Naive thymus-derived CD8-positive, alpha-beta T cell (primary cell): ENCODE measurements at regions of chr6 and their contacts with region 1.

Region 1: GRCh38 chr6:139134817-139135581 is at the start of gene HECA:
- DNase-seq: peak; percentile 99 to 100 (median 100)
- ATAC-seq: peak; percentile 62 to 78
- H3K4me3 Mint-ChIP-seq: peak within 1 kb of the TSS; percentile 86 to 100 (median 96)
- H3K27ac Mint-ChIP-seq: peak within 1 kb of the TSS; percentile 95 to 100 (median 99)
- H3K4me1 Mint-ChIP-seq: peaks cover 39 to 81% (median 68%) of the 10 kb centered on the region in 4 donors
- H3K27me3 Mint-ChIP-seq: peaks cover 0 to 3% (median 0%) of the 10 kb centered on the region in 5 donors
- polyA plus RNA-seq, gene HECA: 4.6 to 8.5 (median 5.5) TPM

Region 2: GRCh38 chr6:138999954-139000725 is 134.9 kb before region 1 on chr6:
- POLR2A ChIA-PET with region 1: no interaction called
- DNase-seq: no peak
- ATAC-seq: no peak
- H3K4me3 Mint-ChIP-seq: no peak overlapping the region
- H3K27ac Mint-ChIP-seq: no peak overlapping the region
- H3K4me1 Mint-ChIP-seq: no peaks in the 10 kb centered on the region
- H3K27me3 Mint-ChIP-seq: peaks cover 0 to 4% (median 2%) of the 10 kb centered on the region in 5 donors

Region 3: DNA sequence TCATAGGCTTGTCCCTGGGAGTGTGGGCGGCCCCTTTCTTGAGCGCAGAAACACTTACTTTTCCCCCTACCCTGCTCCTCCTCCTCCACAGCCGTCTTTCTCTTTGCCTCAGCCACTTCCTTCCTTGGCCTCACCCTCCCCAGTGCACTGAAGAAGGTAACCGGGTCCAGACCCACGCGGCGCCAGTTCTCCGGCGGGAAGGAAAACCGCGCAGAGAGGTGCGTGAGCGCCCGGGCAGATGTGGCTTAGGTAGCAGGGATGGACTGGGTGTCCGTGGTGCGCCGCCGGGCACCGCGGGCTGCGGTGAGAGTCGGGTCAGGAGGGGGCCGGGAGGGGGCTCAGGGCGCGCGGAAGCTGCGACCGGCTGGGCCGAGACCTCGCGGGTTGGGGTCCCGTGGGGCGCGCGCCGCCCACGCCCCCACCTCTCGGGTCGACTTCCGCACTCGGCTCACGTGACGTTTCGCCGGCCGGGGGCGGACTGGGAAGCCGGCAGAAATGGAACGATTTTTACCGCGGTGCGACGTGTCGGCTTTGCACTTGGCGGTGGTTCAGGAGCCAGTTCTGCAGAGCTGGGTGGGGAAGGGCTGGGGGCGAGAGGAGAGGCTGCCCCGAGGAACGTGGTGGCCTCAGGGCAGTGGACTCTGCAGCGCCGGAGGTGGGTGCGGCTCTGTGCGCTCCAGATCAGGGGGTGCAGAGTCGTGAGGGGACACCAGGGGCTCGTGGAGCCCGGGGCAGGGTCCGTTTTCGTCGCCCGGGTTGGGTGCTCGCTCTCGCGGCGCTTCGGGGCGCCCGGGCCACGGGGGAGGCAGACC is 106.1 kb before region 1 on chr6 and contains the start of gene ABRACL:
- POLR2A ChIA-PET with region 1: interaction called, 10 read pairs
- DNase-seq: peak; percentile 54 to 88 (median 74)
- ATAC-seq: peak; percentile 83 to 89
- H3K4me3 Mint-ChIP-seq: peak within 1 kb of the TSS in 7 of 10 donors; percentile 87 to 97 (median 93)
- H3K27ac Mint-ChIP-seq: peak within 1 kb of the TSS; percentile 88 to 97 (median 96)
- H3K4me1 Mint-ChIP-seq: peaks cover 16 to 33% (median 20%) of the 10 kb centered on the region in 4 donors
- H3K27me3 Mint-ChIP-seq: no peaks in the 10 kb centered on the region
- polyA plus RNA-seq, gene ABRACL: 210 to 228 (median 217) TPM

Region 4: DNA sequence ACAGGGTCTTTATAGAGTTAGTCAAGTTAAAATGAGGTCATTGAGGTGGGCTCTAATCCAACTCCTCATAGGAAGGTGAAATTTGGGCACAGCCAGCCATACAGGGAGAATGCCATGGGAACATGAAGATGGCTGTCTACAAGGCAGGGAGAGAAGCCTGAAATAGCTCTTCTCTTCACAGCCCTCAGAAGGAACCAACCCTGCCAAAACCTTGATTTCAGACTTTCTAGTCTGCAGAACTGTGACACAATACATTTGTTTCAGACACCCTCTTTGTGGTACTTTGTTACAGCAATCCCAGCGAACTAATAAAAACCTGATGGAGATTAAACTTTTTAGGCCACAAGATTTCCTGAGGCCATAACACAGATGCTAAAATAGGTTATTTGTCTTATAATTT is 43.2 kb before region 1 on chr6:
- POLR2A ChIA-PET with region 1: no interaction called
- DNase-seq: no peak
- ATAC-seq: no peak
- H3K4me3 Mint-ChIP-seq: no peak overlapping the region
- H3K27ac Mint-ChIP-seq: no peak overlapping the region
- H3K4me1 Mint-ChIP-seq: peaks cover 0 to 16% (median under 1%) of the 10 kb centered on the region in 4 donors
- H3K27me3 Mint-ChIP-seq: no peaks in the 10 kb centered on the region

Region 5: GRCh38 chr6:139117734-139118133 is 17.3 kb before region 1 on chr6:
- POLR2A ChIA-PET with region 1: interaction called, 26 read pairs
- DNase-seq: no peak
- ATAC-seq: no peak
- H3K4me3 Mint-ChIP-seq: peak overlapping the region in 7 of 10 donors; percentile 15 to 65 (median 48)
- H3K27ac Mint-ChIP-seq: peak overlapping the region; percentile 5 to 91 (median 68)
- H3K4me1 Mint-ChIP-seq: peaks cover 25 to 52% (median 49%) of the 10 kb centered on the region in 4 donors
- H3K27me3 Mint-ChIP-seq: no peaks in the 10 kb centered on the region

Region 6: DNA sequence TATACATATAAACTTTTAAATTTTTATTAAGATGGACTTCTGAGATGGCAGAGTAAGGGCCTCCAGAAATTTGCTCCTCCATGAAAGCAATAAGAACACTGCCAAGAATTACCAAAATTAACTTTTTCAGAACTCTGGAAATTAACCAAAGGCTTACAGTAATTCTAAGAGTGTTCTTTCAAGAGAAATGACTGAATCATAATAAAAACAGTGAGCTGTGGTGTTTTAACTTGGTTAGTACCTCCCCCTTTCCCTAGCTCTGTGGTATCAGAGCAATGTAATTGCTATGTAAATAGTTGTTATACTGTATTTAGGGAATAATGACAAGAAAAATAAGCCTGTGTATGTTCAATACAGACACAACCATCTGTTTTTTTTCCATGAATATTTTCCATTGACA is 18.9 kb after region 1 on chr6:
- POLR2A ChIA-PET with region 1: interaction called, 105 read pairs
- DNase-seq: no peak
- ATAC-seq: no peak
- H3K4me3 Mint-ChIP-seq: peak overlapping the region in 8 of 10 donors; percentile 1 to 70 (median 30)
- H3K27ac Mint-ChIP-seq: peak overlapping the region in 8 of 10 donors; percentile 0 to 86 (median 66)
- H3K4me1 Mint-ChIP-seq: peaks cover 55 to 86% (median 84%) of the 10 kb centered on the region in 4 donors
- H3K27me3 Mint-ChIP-seq: no peaks in the 10 kb centered on the region

Region 7: DNA sequence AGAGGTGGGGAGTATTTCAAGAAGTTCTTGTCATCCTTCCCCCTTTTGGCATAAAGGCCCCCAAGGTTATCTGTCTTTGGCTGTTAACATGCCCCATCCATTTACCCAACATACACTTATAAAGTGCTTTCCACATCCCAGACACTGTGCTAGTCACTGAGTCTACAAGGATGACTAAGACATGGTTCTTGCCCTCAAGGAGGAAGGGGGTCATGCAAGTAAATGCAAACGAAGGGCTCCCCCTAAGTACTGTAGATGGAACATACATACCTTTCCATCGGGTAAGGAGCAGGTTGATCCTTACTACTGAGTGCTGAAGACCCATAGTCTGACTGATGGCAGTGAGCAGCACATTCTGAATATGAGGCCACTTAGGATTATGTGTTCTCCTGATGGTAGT is 38.2 kb after region 1 on chr6:
- POLR2A ChIA-PET with region 1: interaction called, 20 read pairs
- DNase-seq: peak in 4 of 10 donors; percentile 28 to 70 (median 52)
- ATAC-seq: peak; percentile 75
- H3K4me3 Mint-ChIP-seq: peak overlapping the region; percentile 23 to 79 (median 66)
- H3K27ac Mint-ChIP-seq: peak overlapping the region; percentile 72 to 92 (median 87)
- H3K4me1 Mint-ChIP-seq: peaks cover 68 to 96% (median 93%) of the 10 kb centered on the region in 4 donors
- H3K27me3 Mint-ChIP-seq: no peaks in the 10 kb centered on the region